ENCODE measurements at regions of chr1 and their contacts with region 1.

Region 1: GRCh38 chr1:198657550-198658064 is 18.8 kb downstream of the PTPRC start:
- DNase-seq: peak; percentile 63
- ATAC-seq: peak; percentile 58
- H3K4me3 ChIP-seq: peak overlapping the region in 4 of 5 experiments; percentile 12 to 25 (median 13)
- H3K4me3 Mint-ChIP-seq: peak overlapping the region; percentile 50
- H3K27ac ChIP-seq: peak overlapping the region; percentile 47 to 90
- H3K27ac Mint-ChIP-seq: peak overlapping the region; percentile 66
- H3K4me1 ChIP-seq: peaks cover 50 to 84% of the 10 kb centered on the region in 2 donors
- H3K4me1 Mint-ChIP-seq: peaks cover 63% of the 10 kb centered on the region
- H3K27me3 ChIP-seq: no peaks in the 10 kb centered on the region
- H3K27me3 Mint-ChIP-seq: no peaks in the 10 kb centered on the region
- CTCF ChIP-seq: no peak

Region 2: GRCh38 chr1:198520524-198521254 is 136.9 kb before region 1 on chr1:
- CTCF ChIA-PET with region 1: interaction called, 3 read pairs
- POLR2A ChIA-PET with region 1: no interaction called
- intact Hi-C with region 1: loop called (anchors 2 kb)
- DNase-seq: peak; percentile 43
- ATAC-seq: peak; percentile 64
- H3K4me3 ChIP-seq: peak overlapping the region in 1 of 5 experiments; percentile 45
- H3K4me3 Mint-ChIP-seq: peak overlapping the region; percentile 67
- H3K27ac ChIP-seq: peak overlapping the region; percentile 35 to 59
- H3K27ac Mint-ChIP-seq: peak overlapping the region; percentile 37
- H3K4me1 ChIP-seq: peaks cover 20 to 34% of the 10 kb centered on the region in 2 donors
- H3K4me1 Mint-ChIP-seq: peaks cover 57% of the 10 kb centered on the region
- H3K27me3 ChIP-seq: no peaks in the 10 kb centered on the region
- H3K27me3 Mint-ChIP-seq: no peaks in the 10 kb centered on the region
- CTCF ChIP-seq: no peak

Region 3: GRCh38 chr1:198638894-198639635 is 18.5 kb before region 1 on chr1 and contains the start of gene PTPRC:
- CTCF ChIA-PET with region 1: interaction called, 4 read pairs
- POLR2A ChIA-PET with region 1: interaction called, 5 read pairs
- intact Hi-C with region 1: loop called (anchors 1 kb)
- DNase-seq: peak; percentile 87
- ATAC-seq: peak; percentile 81
- H3K4me3 ChIP-seq: peak within 1 kb of the TSS; percentile 60 to 98 (median 87)
- H3K4me3 Mint-ChIP-seq: peak within 1 kb of the TSS; percentile 89
- H3K27ac ChIP-seq: peak within 1 kb of the TSS; percentile 82 to 94
- H3K27ac Mint-ChIP-seq: peak within 1 kb of the TSS; percentile 94
- H3K4me1 ChIP-seq: peaks cover 49 to 63% of the 10 kb centered on the region in 2 donors
- H3K4me1 Mint-ChIP-seq: peaks cover 65% of the 10 kb centered on the region
- H3K27me3 ChIP-seq: no peaks in the 10 kb centered on the region
- H3K27me3 Mint-ChIP-seq: no peaks in the 10 kb centered on the region
- CTCF ChIP-seq: no peak
- total RNA-seq, gene PTPRC: 543 and 545 TPM in 2 replicates

Region 4: DNA sequence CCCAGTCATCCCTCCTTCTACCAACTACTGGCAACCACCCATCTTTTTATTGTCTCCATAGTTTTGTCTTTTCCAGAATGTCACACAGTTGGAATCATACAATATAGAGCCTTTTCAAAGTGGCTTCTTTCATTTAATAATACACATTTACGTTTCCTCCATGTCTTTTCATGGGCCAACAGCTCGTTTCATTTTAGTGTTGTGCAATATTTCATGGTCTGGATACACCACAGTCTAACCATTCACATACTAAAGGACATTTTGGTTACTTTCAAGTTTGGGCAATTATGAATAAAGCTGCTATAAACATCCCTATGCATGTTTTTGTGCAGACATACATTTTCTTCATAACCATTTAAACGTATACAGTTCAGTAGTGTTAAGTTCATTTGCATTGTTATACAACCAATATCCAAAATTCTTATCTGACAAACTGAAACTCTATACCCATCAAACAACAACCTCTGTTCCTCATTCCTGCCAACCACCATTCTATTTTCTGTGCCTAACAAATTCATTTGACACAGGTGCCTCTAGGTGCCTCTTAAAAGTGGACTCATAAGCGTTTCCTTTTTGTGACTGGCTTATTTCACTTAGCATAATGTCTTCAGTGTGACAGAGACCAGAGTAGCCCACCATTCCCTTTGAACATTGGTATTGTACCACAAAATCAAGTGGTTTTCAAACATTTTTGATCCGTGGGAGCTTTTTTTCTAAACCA is 1508.1 kb after region 1 on chr1:
- CTCF ChIA-PET with region 1: no interaction called
- POLR2A ChIA-PET with region 1: interaction called, 12 read pairs
- intact Hi-C with region 1: no loop called
- DNase-seq: no peak
- ATAC-seq: no peak
- H3K4me3 ChIP-seq: no peak overlapping the region
- H3K4me3 Mint-ChIP-seq: no peak overlapping the region
- H3K27ac ChIP-seq: no peak overlapping the region
- H3K27ac Mint-ChIP-seq: no peak overlapping the region
- H3K4me1 ChIP-seq: peaks cover 5 to 6% of the 10 kb centered on the region in 2 donors
- H3K4me1 Mint-ChIP-seq: peaks cover 8% of the 10 kb centered on the region
- H3K27me3 ChIP-seq: no peaks in the 10 kb centered on the region
- H3K27me3 Mint-ChIP-seq: no peaks in the 10 kb centered on the region
- CTCF ChIP-seq: no peak